CD4-positive, alpha-beta memory T cell (primary cell): ENCODE measurements at regions of chr18 and their contacts with region 1.

Region 1: DNA sequence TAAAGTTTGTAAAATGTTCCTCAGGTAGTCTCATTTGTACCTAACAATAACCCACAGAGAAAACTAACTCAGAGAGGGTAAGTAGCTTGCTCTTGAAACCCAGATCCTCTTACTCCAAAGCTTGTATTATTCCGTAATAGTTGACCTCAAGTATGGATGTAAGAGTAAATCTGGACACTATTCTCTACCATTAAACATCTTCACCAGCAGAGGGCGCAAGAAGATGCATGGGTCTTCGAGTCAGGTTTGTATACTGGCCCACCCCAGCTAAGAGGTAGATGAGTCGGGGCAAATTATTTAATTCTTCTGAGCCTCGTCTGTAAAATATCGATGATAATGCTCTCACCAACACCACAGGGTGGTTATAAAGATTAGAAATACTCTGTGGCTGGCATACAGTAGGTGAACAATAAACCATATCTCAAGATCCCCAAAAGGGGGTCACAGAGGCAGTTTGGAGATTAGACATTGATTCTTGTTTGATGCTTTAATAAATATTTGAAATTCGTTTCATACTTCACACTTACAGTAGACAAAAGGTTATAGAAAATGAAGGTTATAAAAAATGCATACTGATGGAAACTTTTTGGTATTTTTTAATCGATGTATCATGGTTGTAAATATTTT is 3.5 kb upstream of the CABLES1 start:
- DNase-seq: peak; percentile 54 to 67 (median 58)
- H3K4me3 ChIP-seq: no peak overlapping the region
- H3K4me3 Mint-ChIP-seq: peak overlapping the region in 1 of 8 donors; percentile 22
- H3K27ac ChIP-seq: no peak overlapping the region
- H3K27ac Mint-ChIP-seq: no peak overlapping the region
- H3K4me1 ChIP-seq: peaks cover 19% of the 10 kb centered on the region
- H3K4me1 Mint-ChIP-seq: peaks cover 9 to 18% (median 11%) of the 10 kb centered on the region in 4 donors
- H3K27me3 ChIP-seq: peaks cover 15% of the 10 kb centered on the region
- H3K27me3 Mint-ChIP-seq: peaks cover 19 to 21% of the 10 kb centered on the region in 2 donors

Region 2: DNA sequence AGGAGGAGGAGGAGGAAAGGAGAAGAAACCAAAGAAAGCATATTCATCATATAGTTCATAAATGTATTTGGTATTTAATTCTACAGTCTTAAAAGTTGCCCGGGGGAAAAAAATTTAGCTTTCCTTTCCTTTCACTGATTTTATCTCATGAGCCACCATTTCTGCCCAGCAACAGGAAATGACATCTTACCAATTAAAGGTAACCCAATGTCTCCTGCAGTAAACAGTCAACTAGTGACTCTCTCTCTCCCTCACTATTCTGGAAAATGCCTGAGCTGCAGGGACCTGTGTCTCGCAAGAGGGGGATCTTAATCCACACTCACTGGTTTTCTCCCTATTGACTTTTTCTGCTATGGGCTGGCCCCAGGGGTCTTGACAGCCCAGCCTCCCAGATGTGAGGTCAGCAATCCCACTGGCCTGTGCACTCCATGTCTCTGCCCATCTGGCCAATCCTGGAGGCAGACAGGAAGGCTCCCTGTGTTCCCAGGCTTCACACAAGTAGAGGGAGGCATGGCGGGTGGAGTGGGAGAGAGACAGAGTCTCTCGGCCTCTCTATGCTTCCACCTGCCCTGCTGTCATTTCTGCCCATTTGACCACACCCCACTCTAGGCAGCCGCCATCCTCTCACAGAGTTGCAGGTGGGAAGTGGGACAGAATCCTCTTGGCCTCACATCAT is 82.0 kb before region 1 on chr18:
- CTCF ChIA-PET with region 1: no interaction called
- POLR2A ChIA-PET with region 1: no interaction called
- intact Hi-C with region 1: loop called (anchors 5 kb)
- DNase-seq: peak in 4 of 5 donors; percentile 30 to 50 (median 40)
- H3K4me3 ChIP-seq: peak overlapping the region; percentile 12 to 18
- H3K4me3 Mint-ChIP-seq: peak overlapping the region in 7 of 8 donors; percentile 8 to 75 (median 49)
- H3K27ac ChIP-seq: no peak overlapping the region
- H3K27ac Mint-ChIP-seq: peak overlapping the region in 6 of 7 donors; percentile 42 to 88 (median 74)
- H3K4me1 ChIP-seq: peaks cover 17% of the 10 kb centered on the region
- H3K4me1 Mint-ChIP-seq: peaks cover 10 to 26% (median 15%) of the 10 kb centered on the region in 4 donors
- H3K27me3 ChIP-seq: no peaks in the 10 kb centered on the region
- H3K27me3 Mint-ChIP-seq: peaks cover 0 to 2% of the 10 kb centered on the region in 2 donors

Region 3: GRCh38 chr18:23146861-23147469 is 15.2 kb after region 1 on chr18:
- CTCF ChIA-PET with region 1: interaction called, 10 read pairs
- POLR2A ChIA-PET with region 1: no interaction called
- intact Hi-C with region 1: no loop called
- DNase-seq: no peak
- H3K4me3 ChIP-seq: no peak overlapping the region
- H3K4me3 Mint-ChIP-seq: no peak overlapping the region
- H3K27ac ChIP-seq: no peak overlapping the region
- H3K27ac Mint-ChIP-seq: no peak overlapping the region
- H3K4me1 ChIP-seq: no peaks in the 10 kb centered on the region
- H3K4me1 Mint-ChIP-seq: peaks cover 0 to 2% (median under 1%) of the 10 kb centered on the region in 4 donors
- H3K27me3 ChIP-seq: no peaks in the 10 kb centered on the region
- H3K27me3 Mint-ChIP-seq: peaks cover 0 to 1% of the 10 kb centered on the region in 2 donors

Region 4: GRCh38 chr18:23377669-23378301 is 246.0 kb after region 1 on chr18:
- CTCF ChIA-PET with region 1: interaction called, 43 read pairs
- POLR2A ChIA-PET with region 1: no interaction called
- intact Hi-C with region 1: loop called (anchors 1 kb)
- DNase-seq: no peak
- H3K4me3 ChIP-seq: no peak overlapping the region
- H3K4me3 Mint-ChIP-seq: no peak overlapping the region
- H3K27ac ChIP-seq: no peak overlapping the region
- H3K27ac Mint-ChIP-seq: no peak overlapping the region
- H3K4me1 ChIP-seq: no peaks in the 10 kb centered on the region
- H3K4me1 Mint-ChIP-seq: peaks cover 0 to 2% (median 0%) of the 10 kb centered on the region in 4 donors
- H3K27me3 ChIP-seq: no peaks in the 10 kb centered on the region
- H3K27me3 Mint-ChIP-seq: no peaks in the 10 kb centered on the region

Region 5: DNA sequence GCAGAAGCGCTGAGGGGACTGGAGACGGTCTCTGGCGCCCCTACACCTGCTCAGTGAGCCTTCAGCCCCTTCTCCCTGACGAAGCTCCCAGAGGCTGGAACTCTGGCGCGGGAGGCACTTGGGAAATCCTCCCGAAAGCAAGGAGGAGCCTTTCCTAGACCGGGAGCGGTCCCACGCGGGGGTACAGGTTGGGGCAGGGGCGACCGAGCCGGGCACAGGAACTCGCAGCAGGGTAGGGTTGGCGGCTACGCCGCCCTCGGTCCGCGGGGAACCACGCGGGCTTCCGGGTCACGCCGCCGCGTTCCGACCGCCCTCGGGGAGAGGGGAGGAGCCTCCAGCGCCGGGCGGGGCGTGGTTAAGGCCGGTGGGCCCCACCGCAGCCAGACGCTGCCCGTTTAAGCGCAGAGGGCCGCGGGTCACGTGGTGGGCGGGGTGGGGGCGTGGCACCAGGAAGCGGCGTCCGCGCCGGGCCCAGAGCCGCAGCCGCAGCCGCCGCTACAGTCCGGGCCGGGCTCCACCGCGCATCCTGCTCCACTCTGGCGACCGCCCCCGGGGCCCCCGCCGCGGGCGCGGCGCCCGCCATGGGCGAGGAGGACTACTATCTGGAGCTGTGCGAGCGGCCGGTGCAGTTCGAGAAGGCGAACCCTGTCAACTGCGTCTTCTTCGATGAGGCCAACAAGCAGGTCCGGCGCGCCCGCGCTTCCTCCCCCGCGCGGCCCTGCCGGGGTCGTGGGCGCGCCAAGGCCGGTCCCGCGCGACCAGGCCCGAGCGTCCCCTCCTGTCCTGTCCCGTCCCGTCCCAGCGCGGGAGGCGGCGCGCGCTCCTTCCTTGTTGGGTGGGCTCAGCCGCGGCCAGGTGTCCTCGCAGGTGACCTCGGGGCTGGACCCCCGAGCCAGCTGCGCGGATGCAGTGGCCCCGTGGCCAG is 371.5 kb after region 1 on chr18 and contains the start of gene RMC1:
- CTCF ChIA-PET with region 1: no interaction called
- POLR2A ChIA-PET with region 1: no interaction called
- intact Hi-C with region 1: loop called (anchors 5 kb)
- DNase-seq: peak; percentile 94 to 96 (median 95)
- H3K4me3 ChIP-seq: peak within 1 kb of the TSS; percentile 84 to 85
- H3K4me3 Mint-ChIP-seq: peak within 1 kb of the TSS; percentile 89 to 97 (median 94)
- H3K27ac ChIP-seq: peak within 1 kb of the TSS; percentile 82
- H3K27ac Mint-ChIP-seq: peak within 1 kb of the TSS; percentile 91 to 98 (median 96)
- H3K4me1 ChIP-seq: peaks cover 48% of the 10 kb centered on the region
- H3K4me1 Mint-ChIP-seq: peaks cover 32 to 71% (median 50%) of the 10 kb centered on the region in 4 donors
- H3K27me3 ChIP-seq: no peaks in the 10 kb centered on the region
- H3K27me3 Mint-ChIP-seq: no peaks in the 10 kb centered on the region
- total RNA-seq, gene RMC1: 56.6 TPM